ENCODE measurements at regions of chr20 and their contacts with region 1.

Region 1: DNA sequence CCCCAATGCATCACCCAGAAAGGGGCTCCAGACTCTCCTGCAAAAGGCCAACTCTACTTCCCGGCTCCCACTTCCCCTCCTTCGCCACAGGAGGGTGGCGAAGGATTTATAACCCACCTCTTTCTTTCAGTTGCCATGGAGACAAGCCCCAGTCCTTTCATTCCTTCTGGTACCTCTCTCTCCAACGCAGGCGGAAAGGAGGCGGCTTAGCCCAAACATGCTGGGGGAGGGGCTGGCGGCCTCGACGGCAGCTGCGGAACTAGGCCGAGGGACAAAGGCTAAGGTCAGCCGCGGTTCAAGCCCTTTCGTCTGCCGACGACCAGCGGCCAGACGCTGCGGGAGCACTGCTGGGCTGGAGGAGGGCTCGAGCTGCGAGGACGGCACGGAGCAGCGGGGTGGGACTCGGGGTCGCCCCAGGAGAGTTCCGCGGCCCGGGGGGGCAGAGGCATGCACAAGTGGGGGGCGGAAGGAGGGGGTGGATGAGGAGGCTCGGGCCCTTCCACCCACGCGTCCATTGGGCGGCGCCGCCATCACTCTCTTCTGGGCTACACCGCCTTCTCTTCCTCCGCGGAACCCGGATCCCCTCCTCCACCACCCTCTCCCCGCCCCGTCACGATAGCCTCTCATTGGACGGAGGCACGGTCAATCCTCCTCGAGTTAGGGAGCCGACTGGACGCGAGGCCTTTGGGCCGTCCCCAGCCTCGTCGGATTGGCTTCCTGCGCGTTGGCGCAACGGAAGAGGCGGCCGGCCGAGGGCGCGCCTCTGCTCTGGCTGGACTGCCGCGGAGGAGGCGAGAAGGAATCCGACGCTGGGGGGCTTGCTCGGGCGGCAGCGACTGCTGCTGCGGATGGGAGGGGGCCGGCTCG is at the start of gene PANK2:
- DNase-seq: peak; percentile 98 to 100
- H3K4me3 ChIP-seq: peak within 1 kb of the TSS; percentile 97 to 99
- H3K27ac ChIP-seq: peak within 1 kb of the TSS; percentile 96 to 99
- H3K4me1 ChIP-seq: peaks cover 4 to 30% of the 10 kb centered on the region in 2 donors
- H3K27me3 ChIP-seq: no peaks in the 10 kb centered on the region
- CTCF ChIP-seq: peak; percentile 64 to 69 (median 67)
- total RNA-seq, gene PANK2: 81.1 TPM

Region 2: DNA sequence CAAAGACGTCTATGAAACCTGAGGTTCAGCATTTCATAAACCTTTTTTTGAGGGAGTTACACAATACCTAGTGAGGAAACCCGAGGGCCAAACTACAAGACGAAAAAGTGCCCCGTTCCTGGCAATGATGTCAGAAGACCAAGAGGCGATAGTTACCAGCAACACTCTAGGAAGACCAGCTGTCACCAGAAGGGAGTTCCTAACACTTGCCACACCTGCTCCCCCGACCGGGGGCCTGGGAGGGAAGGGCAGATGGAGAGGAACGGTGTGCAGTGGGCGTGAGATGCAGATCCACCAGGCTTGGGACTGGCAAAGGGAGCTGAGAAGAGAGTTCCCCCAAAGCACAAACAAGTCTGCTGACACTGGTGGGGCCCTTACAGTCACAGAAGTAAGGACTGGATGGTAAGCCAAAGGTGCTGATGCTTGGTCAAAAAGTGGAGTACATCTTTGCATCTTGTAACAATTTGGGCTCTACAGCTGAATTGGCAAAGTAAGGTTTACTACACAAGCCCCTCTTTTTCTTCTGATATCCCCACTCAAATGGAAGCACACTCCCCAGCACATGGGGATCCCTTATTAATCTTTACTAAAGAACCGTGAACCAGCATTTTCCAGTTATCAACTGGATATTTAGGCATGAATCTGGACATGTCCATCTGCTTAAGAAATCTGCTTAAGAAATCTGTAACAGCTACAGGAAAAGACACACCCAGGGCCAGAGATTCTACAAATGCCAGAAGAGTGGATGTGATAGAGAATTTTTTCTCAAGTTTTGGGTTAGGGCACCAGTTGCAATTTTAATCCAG is 38.8 kb after region 1 on chr20:
- intact Hi-C with region 1: loop called (anchors 2 kb)
- DNase-seq: peak in 1 of 2 donors; percentile 71
- H3K4me3 ChIP-seq: no peak overlapping the region
- H3K27ac ChIP-seq: peak overlapping the region; percentile 23 to 32
- H3K4me1 ChIP-seq: peaks cover 9 to 42% of the 10 kb centered on the region in 2 donors
- H3K27me3 ChIP-seq: no peaks in the 10 kb centered on the region
- CTCF ChIP-seq: no peak

Region 3: GRCh38 chr20:4014031-4014474 is 125.2 kb after region 1 on chr20:
- intact Hi-C with region 1: loop called (anchors 2 kb)
- DNase-seq: peak in 1 of 2 donors; percentile 78
- H3K4me3 ChIP-seq: peak overlapping the region; percentile 91
- H3K27ac ChIP-seq: peak overlapping the region; percentile 91 to 95
- H3K4me1 ChIP-seq: peaks cover 6 to 12% of the 10 kb centered on the region in 2 donors
- H3K27me3 ChIP-seq: no peaks in the 10 kb centered on the region
- CTCF ChIP-seq: peak; percentile 43 to 54 (median 43)

Region 4: GRCh38 chr20:4082406-4083097 is 193.7 kb after region 1 on chr20:
- intact Hi-C with region 1: loop called (anchors 1 kb)
- DNase-seq: peak in 1 of 2 donors; percentile 79
- H3K4me3 ChIP-seq: no peak overlapping the region
- H3K27ac ChIP-seq: peak overlapping the region; percentile 77 to 88
- H3K4me1 ChIP-seq: peaks cover 13 to 37% of the 10 kb centered on the region in 2 donors
- H3K27me3 ChIP-seq: no peaks in the 10 kb centered on the region
- CTCF ChIP-seq: no peak